Activated naive CD4-positive, alpha-beta T cell treated with anti-CD3 and anti-CD28 coated beads for 36 hours (primary cell): ENCODE measurements at regions of chr3 and their contacts with region 1.

Region 1: GRCh38 chr3:150763122-150763841 is at the start of gene SIAH2:
- DNase-seq: peak; percentile 94
- H3K4me3 Mint-ChIP-seq: peak within 1 kb of the TSS; percentile 99
- H3K27ac Mint-ChIP-seq: peak within 1 kb of the TSS; percentile 100
- H3K4me1 Mint-ChIP-seq: peaks cover 46% of the 10 kb centered on the region
- H3K27me3 Mint-ChIP-seq: no peaks in the 10 kb centered on the region
- total RNA-seq, gene SIAH2: 67.1 to 68.8 TPM

Region 2: GRCh38 chr3:150408221-150409102 is 354.8 kb before region 1 on chr3 and contains the start of gene TSC22D2:
- CTCF ChIA-PET with region 1: no interaction called
- intact Hi-C with region 1: loop called (anchors 1 kb)
- DNase-seq: peak; percentile 96
- H3K4me3 Mint-ChIP-seq: peak within 1 kb of the TSS; percentile 77
- H3K27ac Mint-ChIP-seq: peak within 1 kb of the TSS; percentile 99
- H3K4me1 Mint-ChIP-seq: peaks cover 23% of the 10 kb centered on the region
- H3K27me3 Mint-ChIP-seq: no peaks in the 10 kb centered on the region
- total RNA-seq, gene TSC22D2: 13.0 to 13.7 TPM

Region 3: DNA sequence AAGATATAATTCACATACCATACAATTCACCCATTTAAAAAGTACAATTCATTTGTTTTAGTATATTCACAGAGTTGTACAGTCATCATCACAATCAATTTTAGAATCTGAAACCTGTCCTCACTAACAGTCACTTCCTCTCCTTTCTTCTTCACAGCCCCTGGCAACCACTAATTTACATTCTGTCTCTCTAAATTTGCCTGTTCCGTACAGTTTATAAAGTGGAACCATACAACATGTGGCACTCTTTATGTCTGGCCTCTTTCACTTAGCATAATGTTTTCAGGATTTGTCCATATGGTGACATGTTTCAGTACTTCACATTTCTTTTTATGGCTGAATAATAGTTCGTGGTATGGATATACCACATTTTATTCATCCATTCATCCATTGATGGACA is 82.2 kb before region 1 on chr3:
- CTCF ChIA-PET with region 1: no interaction called
- intact Hi-C with region 1: loop called (anchors 1 kb)
- DNase-seq: peak; percentile 23
- H3K4me3 Mint-ChIP-seq: no peak overlapping the region
- H3K27ac Mint-ChIP-seq: peak overlapping the region; percentile 31
- H3K4me1 Mint-ChIP-seq: peaks cover 16% of the 10 kb centered on the region
- H3K27me3 Mint-ChIP-seq: no peaks in the 10 kb centered on the region

Region 4: DNA sequence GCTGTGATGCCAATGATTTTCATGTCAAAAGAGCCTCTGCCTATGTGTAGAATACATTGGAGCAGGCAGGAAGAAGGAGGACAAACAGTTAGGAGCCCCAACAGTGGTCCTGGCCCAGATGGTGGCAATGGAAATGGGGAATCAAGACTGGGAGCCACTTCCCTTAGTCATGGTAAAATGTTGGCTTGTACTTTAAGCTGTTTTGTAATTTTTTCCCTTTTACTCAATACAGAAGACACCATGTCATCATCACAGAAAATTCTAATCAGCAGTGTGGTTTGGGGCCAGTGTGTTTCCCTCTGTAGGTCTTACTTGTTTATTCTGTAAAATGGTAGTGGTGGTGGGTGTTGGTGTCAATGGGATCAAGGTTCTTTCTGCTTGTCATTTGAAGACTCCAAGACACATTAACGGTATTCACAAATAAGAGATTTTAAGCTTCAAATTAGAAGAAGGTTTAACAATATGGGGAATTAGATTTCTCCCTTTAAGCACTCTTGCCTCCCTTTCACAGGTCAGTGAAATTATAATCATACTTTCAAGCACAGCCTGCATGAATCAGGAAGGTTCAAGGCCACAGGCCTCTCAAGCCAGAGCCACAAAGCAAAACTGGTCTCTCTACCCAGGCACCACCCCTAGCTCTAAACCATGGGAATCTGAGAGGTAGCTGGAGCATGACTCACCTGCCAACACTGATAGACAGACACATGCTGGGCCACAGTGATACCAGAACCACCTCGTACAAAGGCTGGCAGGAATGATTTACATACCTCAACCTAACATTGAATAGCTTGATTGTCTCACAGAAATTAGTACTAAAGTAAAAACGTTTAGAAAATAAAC is 25.2 kb before region 1 on chr3:
- CTCF ChIA-PET with region 1: interaction called, 15 read pairs
- intact Hi-C with region 1: loop called (anchors 1 kb)
- DNase-seq: peak; percentile 81
- H3K4me3 Mint-ChIP-seq: peak overlapping the region; percentile 41
- H3K27ac Mint-ChIP-seq: peak overlapping the region; percentile 99
- H3K4me1 Mint-ChIP-seq: peaks cover 77% of the 10 kb centered on the region
- H3K27me3 Mint-ChIP-seq: no peaks in the 10 kb centered on the region

Region 5: GRCh38 chr3:150787741-150788370 is 24.6 kb after region 1 on chr3:
- CTCF ChIA-PET with region 1: interaction called, 89 read pairs
- intact Hi-C with region 1: loop called (anchors 1 kb)
- DNase-seq: peak; percentile 93
- H3K4me3 Mint-ChIP-seq: no peak overlapping the region
- H3K27ac Mint-ChIP-seq: no peak overlapping the region
- H3K4me1 Mint-ChIP-seq: peaks cover 49% of the 10 kb centered on the region
- H3K27me3 Mint-ChIP-seq: peaks cover 6% of the 10 kb centered on the region

Region 6: GRCh38 chr3:151168269-151169094 is 405.2 kb after region 1 on chr3:
- CTCF ChIA-PET with region 1: no interaction called
- intact Hi-C with region 1: no loop called
- DNase-seq: peak; percentile 93
- H3K4me3 Mint-ChIP-seq: no peak overlapping the region
- H3K27ac Mint-ChIP-seq: no peak overlapping the region
- H3K4me1 Mint-ChIP-seq: peaks cover 37% of the 10 kb centered on the region
- H3K27me3 Mint-ChIP-seq: no peaks in the 10 kb centered on the region

Region 7: GRCh38 chr3:151210676-151211381 is 447.5 kb after region 1 on chr3:
- CTCF ChIA-PET with region 1: no interaction called
- intact Hi-C with region 1: loop called (anchors 1 kb)
- DNase-seq: peak; percentile 31
- H3K4me3 Mint-ChIP-seq: peak overlapping the region; percentile 48
- H3K27ac Mint-ChIP-seq: peak overlapping the region; percentile 90
- H3K4me1 Mint-ChIP-seq: peaks cover 56% of the 10 kb centered on the region
- H3K27me3 Mint-ChIP-seq: no peaks in the 10 kb centered on the region

Region 8: GRCh38 chr3:152193673-152194267 is 1430.5 kb after region 1 on chr3:
- CTCF ChIA-PET with region 1: no interaction called
- intact Hi-C with region 1: loop called (anchors 5 kb)
- DNase-seq: peak; percentile 57
- H3K4me3 Mint-ChIP-seq: peak overlapping the region; percentile 72
- H3K27ac Mint-ChIP-seq: peak overlapping the region; percentile 88
- H3K4me1 Mint-ChIP-seq: peaks cover 82% of the 10 kb centered on the region
- H3K27me3 Mint-ChIP-seq: no peaks in the 10 kb centered on the region